CD4-positive, alpha-beta memory T cell (primary cell): ENCODE measurements at regions of chr3 and their contacts with region 1.

Region 1: DNA sequence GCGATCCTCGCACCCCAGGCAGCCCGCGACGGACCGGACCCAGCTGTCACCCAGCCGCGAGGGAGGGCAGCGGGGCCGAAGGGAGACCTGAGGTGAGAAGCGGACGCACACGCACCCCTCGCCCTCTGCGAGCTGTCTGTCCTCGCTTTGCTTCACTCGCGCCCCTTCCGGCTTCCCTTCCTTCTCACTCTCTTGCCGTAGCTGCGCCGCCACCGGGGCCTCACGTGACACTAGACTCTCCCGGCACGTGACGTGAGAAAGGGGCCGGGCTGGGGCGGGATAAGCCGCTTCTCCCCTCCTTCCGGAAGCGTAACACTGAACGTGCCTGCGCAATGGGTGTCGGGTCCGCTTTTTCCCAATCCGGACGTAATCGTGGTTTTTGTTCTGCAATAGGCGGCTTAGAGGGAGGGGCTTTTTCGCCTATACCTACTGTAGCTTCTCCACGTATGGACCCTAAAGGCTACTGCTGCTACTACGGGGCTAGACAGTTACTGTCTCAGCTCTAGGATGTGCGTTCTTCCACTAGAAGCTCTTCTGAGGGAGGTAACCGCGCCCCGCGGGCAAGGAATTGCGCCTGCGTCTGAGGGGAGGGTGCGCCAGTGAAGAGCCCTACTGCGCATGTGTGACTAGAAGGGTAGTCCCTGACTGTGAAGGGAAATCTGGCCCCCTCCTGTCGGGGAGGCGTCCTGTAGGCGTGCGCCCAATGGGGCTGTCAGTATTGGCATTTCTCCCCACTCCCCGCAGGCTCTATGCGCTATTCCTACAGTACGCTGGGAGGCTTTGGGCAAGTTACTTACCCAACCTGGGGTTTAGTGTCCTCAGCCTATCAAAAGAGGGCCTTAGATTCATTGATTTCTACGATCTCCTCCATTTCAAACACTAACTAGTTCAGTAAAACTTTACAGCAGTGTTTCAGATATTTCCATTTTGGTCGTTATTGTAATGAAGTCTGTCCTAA is at the starts of genes ATG3 and SLC35A5:
- DNase-seq: peak; percentile 99 to 100 (median 99)
- H3K4me3 ChIP-seq: peak within 1 kb of the TSS; percentile 81 to 92
- H3K4me3 Mint-ChIP-seq: peak within 1 kb of the TSS; percentile 96 to 99 (median 98)
- H3K27ac ChIP-seq: peak within 1 kb of the TSS; percentile 99
- H3K27ac Mint-ChIP-seq: peak within 1 kb of the TSS; percentile 97 to 100 (median 100)
- H3K4me1 ChIP-seq: peaks cover 44% of the 10 kb centered on the region
- H3K4me1 Mint-ChIP-seq: peaks cover 29 to 59% (median 47%) of the 10 kb centered on the region in 4 donors
- H3K27me3 ChIP-seq: no peaks in the 10 kb centered on the region
- H3K27me3 Mint-ChIP-seq: no peaks in the 10 kb centered on the region
- total RNA-seq, gene ATG3: 49.0 to 54.0 TPM
- total RNA-seq, gene SLC35A5: 25.5 to 26.6 TPM

Region 2: DNA sequence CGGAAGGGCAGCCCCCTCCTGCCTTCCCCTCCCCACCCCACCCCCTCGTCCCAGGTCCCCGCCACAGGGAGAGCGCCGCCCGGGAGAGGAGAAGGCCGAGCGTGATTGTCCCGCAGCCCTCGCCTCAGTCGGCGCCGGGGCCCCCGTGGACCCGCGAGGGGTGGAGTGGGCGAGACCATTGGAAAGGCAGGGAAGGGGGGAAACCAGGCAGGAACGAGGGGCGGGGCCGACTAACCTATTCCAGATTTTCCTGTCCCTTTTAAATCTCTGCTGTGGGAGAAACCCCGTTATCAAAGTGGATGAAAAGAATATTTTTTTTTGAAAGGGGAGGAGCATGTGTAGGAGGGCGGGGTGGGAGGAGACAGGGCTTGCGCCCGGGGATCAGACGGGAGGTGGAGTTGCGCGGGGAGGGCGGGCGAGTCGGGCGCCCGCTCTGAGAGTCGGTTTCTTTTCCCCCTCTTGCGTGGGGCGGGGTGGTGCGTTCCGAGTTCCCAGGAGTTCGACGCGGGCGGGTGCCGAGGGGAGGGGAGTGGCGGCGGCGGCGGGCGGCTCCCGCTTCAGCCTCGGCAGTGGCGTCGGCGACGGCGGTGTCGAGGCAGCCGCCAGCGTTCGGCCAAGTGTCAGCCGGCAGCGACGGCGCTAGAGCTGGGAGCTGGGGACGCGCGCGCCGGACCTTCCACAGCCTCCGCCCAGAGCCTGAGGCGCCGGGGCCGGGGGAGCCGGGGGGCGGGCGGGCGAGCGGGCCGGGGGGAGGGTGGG is 1490.6 kb before region 1 on chr3 and contains the start of gene NECTIN3:
- CTCF ChIA-PET with region 1: no interaction called
- POLR2A ChIA-PET with region 1: no interaction called
- intact Hi-C with region 1: loop called (anchors 5 kb)
- DNase-seq: peak; percentile 84 to 92 (median 87)
- H3K4me3 ChIP-seq: peak within 1 kb of the TSS; percentile 78 to 82
- H3K4me3 Mint-ChIP-seq: peak within 1 kb of the TSS; percentile 93 to 97 (median 96)
- H3K27ac ChIP-seq: peak within 1 kb of the TSS; percentile 57
- H3K27ac Mint-ChIP-seq: peak within 1 kb of the TSS; percentile 90 to 95 (median 93)
- H3K4me1 ChIP-seq: peaks cover 32% of the 10 kb centered on the region
- H3K4me1 Mint-ChIP-seq: peaks cover 33 to 54% (median 44%) of the 10 kb centered on the region in 4 donors
- H3K27me3 ChIP-seq: no peaks in the 10 kb centered on the region
- H3K27me3 Mint-ChIP-seq: peaks cover 0 to 4% of the 10 kb centered on the region in 2 donors
- total RNA-seq, gene NECTIN3: 12.2 to 15.6 TPM

Region 3: GRCh38 chr3:112136959-112137693 is 424.9 kb before region 1 on chr3:
- CTCF ChIA-PET with region 1: no interaction called
- POLR2A ChIA-PET with region 1: interaction called, 9 read pairs
- intact Hi-C with region 1: loop called (anchors 2 kb)
- DNase-seq: peak in 4 of 5 donors; percentile 41 to 50 (median 45)
- H3K4me3 ChIP-seq: no peak overlapping the region
- H3K4me3 Mint-ChIP-seq: peak overlapping the region in 1 of 8 donors; percentile 40
- H3K27ac ChIP-seq: no peak overlapping the region
- H3K27ac Mint-ChIP-seq: peak overlapping the region; percentile 10 to 99 (median 68)
- H3K4me1 ChIP-seq: peaks cover 58% of the 10 kb centered on the region
- H3K4me1 Mint-ChIP-seq: peaks cover 45 to 61% (median 53%) of the 10 kb centered on the region in 4 donors
- H3K27me3 ChIP-seq: no peaks in the 10 kb centered on the region
- H3K27me3 Mint-ChIP-seq: no peaks in the 10 kb centered on the region

Region 4: DNA sequence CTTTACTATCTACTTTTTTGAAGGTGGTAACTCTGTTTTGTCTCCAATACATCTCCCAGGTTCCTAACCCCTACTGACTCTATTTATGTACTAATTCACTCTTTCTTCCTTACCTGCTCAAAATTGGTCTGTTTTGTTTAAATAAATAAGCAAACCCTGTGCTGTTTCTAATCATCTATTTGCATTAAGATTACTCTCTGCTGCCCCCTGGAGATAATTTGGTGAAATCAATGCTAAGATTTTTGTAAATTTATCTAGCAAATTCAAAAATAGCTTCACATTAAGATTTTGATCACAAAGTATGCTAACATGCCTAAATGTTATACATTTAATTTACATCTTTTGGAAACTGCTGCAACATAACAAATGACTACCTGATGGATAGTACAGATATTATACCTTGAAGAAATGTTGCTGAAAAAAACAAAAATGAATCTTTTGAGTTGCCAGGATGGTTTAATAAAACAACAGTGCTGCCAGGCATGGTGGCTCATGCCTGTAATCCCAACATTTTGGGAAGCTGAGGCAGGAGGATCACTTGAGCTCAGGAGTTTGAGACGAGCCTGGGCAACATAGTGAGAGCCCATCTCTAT is 417.3 kb after region 1 on chr3:
- CTCF ChIA-PET with region 1: no interaction called
- POLR2A ChIA-PET with region 1: no interaction called
- intact Hi-C with region 1: loop called (anchors 10 kb)
- DNase-seq: peak in 4 of 5 donors; percentile 59 to 67 (median 62)
- H3K4me3 ChIP-seq: no peak overlapping the region
- H3K4me3 Mint-ChIP-seq: peak overlapping the region in 2 of 8 donors; percentile 12 to 39
- H3K27ac ChIP-seq: no peak overlapping the region
- H3K27ac Mint-ChIP-seq: peak overlapping the region in 6 of 7 donors; percentile 0 to 81 (median 42)
- H3K4me1 ChIP-seq: peaks cover 68% of the 10 kb centered on the region
- H3K4me1 Mint-ChIP-seq: peaks cover 48 to 73% (median 60%) of the 10 kb centered on the region in 4 donors
- H3K27me3 ChIP-seq: no peaks in the 10 kb centered on the region
- H3K27me3 Mint-ChIP-seq: no peaks in the 10 kb centered on the region

Region 5: GRCh38 chr3:113019182-113020137 is 457.4 kb after region 1 on chr3:
- CTCF ChIA-PET with region 1: no interaction called
- POLR2A ChIA-PET with region 1: interaction called, 9 read pairs
- intact Hi-C with region 1: loop called (anchors 10 kb)
- DNase-seq: peak; percentile 76 to 89 (median 81)
- H3K4me3 ChIP-seq: peak overlapping the region; percentile 59 to 89
- H3K4me3 Mint-ChIP-seq: peak overlapping the region; percentile 92 to 97 (median 96)
- H3K27ac ChIP-seq: peak overlapping the region; percentile 89
- H3K27ac Mint-ChIP-seq: peak overlapping the region; percentile 91 to 98 (median 95)
- H3K4me1 ChIP-seq: peaks cover 45% of the 10 kb centered on the region
- H3K4me1 Mint-ChIP-seq: peaks cover 42 to 76% (median 61%) of the 10 kb centered on the region in 4 donors
- H3K27me3 ChIP-seq: no peaks in the 10 kb centered on the region
- H3K27me3 Mint-ChIP-seq: no peaks in the 10 kb centered on the region

Region 6: DNA sequence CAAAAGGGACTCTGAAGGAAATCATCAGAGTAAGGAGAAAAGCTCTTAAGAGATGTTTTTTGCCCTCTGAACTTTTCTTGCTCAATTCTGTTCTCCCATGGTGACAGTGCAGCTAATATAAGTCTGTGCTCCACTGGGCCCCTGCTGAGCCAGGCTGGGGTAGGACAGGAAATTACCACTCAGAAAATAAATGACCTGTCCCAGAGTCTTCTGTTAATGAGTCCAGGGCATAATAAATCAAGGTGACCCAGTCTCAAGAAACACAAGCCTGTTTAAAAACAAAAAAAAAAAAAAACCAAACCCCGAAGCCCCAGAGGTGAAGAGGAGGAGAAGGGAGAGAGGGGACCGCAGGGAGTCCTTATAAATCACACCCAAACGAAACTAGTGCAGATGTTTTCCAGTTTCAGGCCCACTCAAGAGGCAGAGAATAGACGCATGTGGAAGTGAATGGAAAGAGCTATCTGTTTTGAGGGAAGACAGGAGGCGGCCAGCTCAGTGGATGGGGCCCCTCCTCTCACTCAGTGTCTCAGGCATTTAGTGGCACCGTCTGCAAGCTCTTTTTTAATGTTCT is 589.5 kb after region 1 on chr3:
- CTCF ChIA-PET with region 1: no interaction called
- POLR2A ChIA-PET with region 1: no interaction called
- intact Hi-C with region 1: no loop called
- DNase-seq: no peak
- H3K4me3 ChIP-seq: no peak overlapping the region
- H3K4me3 Mint-ChIP-seq: no peak overlapping the region
- H3K27ac ChIP-seq: no peak overlapping the region
- H3K27ac Mint-ChIP-seq: no peak overlapping the region
- H3K4me1 ChIP-seq: no peaks in the 10 kb centered on the region
- H3K4me1 Mint-ChIP-seq: peaks cover 0 to 1% (median 0%) of the 10 kb centered on the region in 4 donors
- H3K27me3 ChIP-seq: no peaks in the 10 kb centered on the region
- H3K27me3 Mint-ChIP-seq: peaks cover 0 to 4% of the 10 kb centered on the region in 2 donors

Region 7: DNA sequence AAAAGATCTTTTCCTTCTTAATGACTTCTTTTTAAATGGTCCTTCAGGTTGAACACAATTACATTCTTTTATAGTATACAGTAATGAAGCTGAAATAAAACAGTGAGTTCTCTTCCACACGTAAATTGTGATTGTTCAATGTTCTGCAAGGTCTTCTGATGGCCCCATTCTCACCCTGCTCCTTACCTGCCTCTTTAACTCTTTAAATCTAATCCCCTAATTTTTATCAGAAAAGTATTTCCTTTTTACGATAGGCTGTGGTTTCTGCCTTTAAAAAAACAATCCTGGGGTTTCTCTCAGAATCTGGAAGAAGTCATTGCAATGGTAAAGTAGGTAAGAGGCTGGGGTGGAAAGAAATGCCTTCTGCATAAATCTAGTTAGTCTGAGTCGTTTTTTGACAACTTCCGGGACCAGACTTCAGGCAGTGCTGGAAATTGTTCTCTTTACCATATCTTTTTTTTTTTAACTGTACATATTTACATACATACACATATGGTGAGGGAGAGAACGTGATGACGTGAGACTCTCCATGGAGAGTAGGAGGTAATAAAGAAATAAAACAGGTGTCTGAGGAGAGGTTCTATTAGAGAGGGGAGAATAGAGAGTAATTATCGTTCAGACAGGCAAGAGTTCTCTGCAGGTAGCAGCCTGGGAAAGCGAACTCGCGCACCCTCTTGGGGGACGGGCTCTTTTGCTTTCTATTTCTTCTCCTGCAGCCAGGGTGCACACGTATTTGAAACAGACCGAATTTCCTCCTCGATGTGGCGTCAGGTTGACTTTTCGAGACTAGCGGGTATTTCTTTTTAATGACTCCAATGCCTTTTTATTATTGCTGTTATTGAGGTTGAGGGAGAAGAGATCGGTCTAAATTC is 970.1 kb after region 1 on chr3 and contains the start of gene SIDT1:
- CTCF ChIA-PET with region 1: no interaction called
- POLR2A ChIA-PET with region 1: interaction called, 4 read pairs
- intact Hi-C with region 1: loop called (anchors 2 kb)
- DNase-seq: peak; percentile 77 to 84 (median 80)
- H3K4me3 ChIP-seq: peak within 1 kb of the TSS; percentile 79 to 96
- H3K4me3 Mint-ChIP-seq: peak within 1 kb of the TSS; percentile 97 to 100 (median 99)
- H3K27ac ChIP-seq: peak within 1 kb of the TSS; percentile 90
- H3K27ac Mint-ChIP-seq: peak within 1 kb of the TSS; percentile 95 to 100 (median 100)
- H3K4me1 ChIP-seq: peaks cover 45% of the 10 kb centered on the region
- H3K4me1 Mint-ChIP-seq: peaks cover 36 to 55% (median 45%) of the 10 kb centered on the region in 4 donors
- H3K27me3 ChIP-seq: no peaks in the 10 kb centered on the region
- H3K27me3 Mint-ChIP-seq: no peaks in the 10 kb centered on the region
- total RNA-seq, gene SIDT1: 55.0 to 56.1 TPM